IMR-90 (cell line): ENCODE measurements at regions of chr5 and their contacts with region 1.

Region 1: GRCh38 chr5:135034236-135034962 is 371 bp upstream of the PITX1 start:
- DNase-seq: peak; percentile 69
- ATAC-seq: peak; percentile 73
- H3K4me3 ChIP-seq: peak overlapping the region; percentile 60
- H3K27ac ChIP-seq: peak overlapping the region; percentile 92
- H3K4me1 ChIP-seq: peaks cover 19% of the 10 kb centered on the region; the same call in 1 of the 2 replicates
- H3K27me3 ChIP-seq: peaks cover 26% of the 10 kb centered on the region
- CTCF ChIP-seq: no peak
- POLR2A ChIP-seq: no peak
- RAD21 ChIP-seq: no peak; the same call in 1 of the 2 replicates

Region 2: GRCh38 chr5:135139381-135140137 is 105.2 kb after region 1 on chr5:
- CTCF ChIA-PET with region 1: no interaction called
- POLR2A ChIA-PET with region 1: interaction called, 4 read pairs
- dilution Hi-C with region 1: no loop called
- in situ Hi-C with region 1: no loop called
- intact Hi-C with region 1: loop called (anchors 2 kb)
- DNase-seq: peak; percentile 96
- ATAC-seq: peak; percentile 83
- H3K4me3 ChIP-seq: no peak overlapping the region; the same call in 1 of the 2 replicates
- H3K27ac ChIP-seq: peak overlapping the region; percentile 99
- H3K4me1 ChIP-seq: peaks cover 45% of the 10 kb centered on the region
- H3K27me3 ChIP-seq: no peaks in the 10 kb centered on the region
- CTCF ChIP-seq: no peak
- POLR2A ChIP-seq: no peak
- RAD21 ChIP-seq: no peak

Region 3: GRCh38 chr5:135191084-135191826 is 156.9 kb after region 1 on chr5:
- CTCF ChIA-PET with region 1: interaction called, 4 read pairs
- POLR2A ChIA-PET with region 1: no interaction called
- dilution Hi-C with region 1: no loop called
- in situ Hi-C with region 1: no loop called
- intact Hi-C with region 1: loop called (anchors 2 kb)
- DNase-seq: peak; percentile 68
- ATAC-seq: peak; percentile 77
- H3K4me3 ChIP-seq: no peak overlapping the region
- H3K27ac ChIP-seq: no peak overlapping the region
- H3K4me1 ChIP-seq: peaks cover 19% of the 10 kb centered on the region
- H3K27me3 ChIP-seq: no peaks in the 10 kb centered on the region
- CTCF ChIP-seq: peak; percentile 89
- POLR2A ChIP-seq: no peak
- RAD21 ChIP-seq: peak; percentile 90

Region 4: DNA sequence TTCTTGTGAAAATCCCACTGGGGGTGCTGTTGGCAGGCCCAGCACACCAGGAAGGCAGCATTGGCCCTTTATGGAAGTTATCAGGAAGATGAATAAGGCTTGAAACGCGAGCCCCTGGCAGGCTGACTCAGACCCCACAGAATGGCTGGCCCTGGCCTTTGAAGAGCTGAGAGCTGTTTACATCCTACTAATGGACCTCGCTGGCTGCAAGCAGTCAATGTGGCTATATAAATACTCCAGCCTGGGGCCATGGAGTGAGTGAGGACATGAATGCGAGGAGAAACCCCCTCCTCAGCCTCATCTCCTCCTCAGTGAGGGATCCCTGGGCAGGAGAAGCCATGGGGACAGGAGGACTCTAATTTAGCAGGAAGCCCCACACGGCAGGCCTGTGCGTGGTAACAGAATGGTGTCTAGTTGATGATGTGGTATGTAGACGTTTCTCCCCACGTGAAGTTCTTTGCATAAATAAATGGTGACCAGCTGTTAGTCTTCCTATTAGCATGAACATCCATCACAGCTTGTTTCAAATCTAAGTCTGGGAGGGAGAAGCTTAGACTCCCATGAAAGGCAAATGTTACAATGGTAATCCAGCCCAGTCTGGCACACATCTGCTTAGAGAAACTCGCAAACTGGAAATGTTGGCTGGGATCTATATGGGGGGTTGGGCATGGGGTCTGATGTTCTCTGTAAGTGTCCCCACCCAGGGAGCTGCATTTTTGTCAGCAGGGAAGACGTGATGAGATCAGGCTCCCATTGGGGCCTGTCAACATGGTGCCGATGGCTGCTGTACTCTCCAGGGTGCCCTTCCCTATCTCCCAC is 174.7 kb after region 1 on chr5:
- CTCF ChIA-PET with region 1: interaction called, 3 read pairs
- POLR2A ChIA-PET with region 1: no interaction called
- dilution Hi-C with region 1: no loop called
- in situ Hi-C with region 1: no loop called
- intact Hi-C with region 1: loop called (anchors 5 kb)
- DNase-seq: peak; percentile 98
- ATAC-seq: peak; percentile 87
- H3K4me3 ChIP-seq: no peak overlapping the region
- H3K27ac ChIP-seq: peak overlapping the region; percentile 98
- H3K4me1 ChIP-seq: peaks cover 40% of the 10 kb centered on the region
- H3K27me3 ChIP-seq: no peaks in the 10 kb centered on the region
- CTCF ChIP-seq: peak; percentile 54
- POLR2A ChIP-seq: no peak
- RAD21 ChIP-seq: peak; percentile 61

Region 5: GRCh38 chr5:135263022-135263668 is 228.7 kb after region 1 on chr5:
- CTCF ChIA-PET with region 1: no interaction called
- POLR2A ChIA-PET with region 1: no interaction called
- dilution Hi-C with region 1: no loop called
- in situ Hi-C with region 1: no loop called
- intact Hi-C with region 1: loop called (anchors 5 kb)
- DNase-seq: no peak
- ATAC-seq: no peak
- H3K4me3 ChIP-seq: no peak overlapping the region
- H3K27ac ChIP-seq: peak overlapping the region; percentile 3; the same call in 1 of the 2 replicates
- H3K4me1 ChIP-seq: peaks cover 26% of the 10 kb centered on the region
- H3K27me3 ChIP-seq: no peaks in the 10 kb centered on the region
- CTCF ChIP-seq: no peak
- POLR2A ChIP-seq: no peak
- RAD21 ChIP-seq: no peak

Region 6: GRCh38 chr5:135426102-135427082 is 392.0 kb after region 1 on chr5:
- CTCF ChIA-PET with region 1: no interaction called
- POLR2A ChIA-PET with region 1: interaction called, 16 read pairs
- dilution Hi-C with region 1: no loop called
- in situ Hi-C with region 1: no loop called
- intact Hi-C with region 1: no loop called
- DNase-seq: peak; percentile 61
- ATAC-seq: peak; percentile 93
- H3K4me3 ChIP-seq: no peak overlapping the region
- H3K27ac ChIP-seq: no peak overlapping the region
- H3K4me1 ChIP-seq: no peaks in the 10 kb centered on the region
- H3K27me3 ChIP-seq: no peaks in the 10 kb centered on the region
- CTCF ChIP-seq: peak; percentile 71
- POLR2A ChIP-seq: no peak
- RAD21 ChIP-seq: peak; percentile 74

Region 7: DNA sequence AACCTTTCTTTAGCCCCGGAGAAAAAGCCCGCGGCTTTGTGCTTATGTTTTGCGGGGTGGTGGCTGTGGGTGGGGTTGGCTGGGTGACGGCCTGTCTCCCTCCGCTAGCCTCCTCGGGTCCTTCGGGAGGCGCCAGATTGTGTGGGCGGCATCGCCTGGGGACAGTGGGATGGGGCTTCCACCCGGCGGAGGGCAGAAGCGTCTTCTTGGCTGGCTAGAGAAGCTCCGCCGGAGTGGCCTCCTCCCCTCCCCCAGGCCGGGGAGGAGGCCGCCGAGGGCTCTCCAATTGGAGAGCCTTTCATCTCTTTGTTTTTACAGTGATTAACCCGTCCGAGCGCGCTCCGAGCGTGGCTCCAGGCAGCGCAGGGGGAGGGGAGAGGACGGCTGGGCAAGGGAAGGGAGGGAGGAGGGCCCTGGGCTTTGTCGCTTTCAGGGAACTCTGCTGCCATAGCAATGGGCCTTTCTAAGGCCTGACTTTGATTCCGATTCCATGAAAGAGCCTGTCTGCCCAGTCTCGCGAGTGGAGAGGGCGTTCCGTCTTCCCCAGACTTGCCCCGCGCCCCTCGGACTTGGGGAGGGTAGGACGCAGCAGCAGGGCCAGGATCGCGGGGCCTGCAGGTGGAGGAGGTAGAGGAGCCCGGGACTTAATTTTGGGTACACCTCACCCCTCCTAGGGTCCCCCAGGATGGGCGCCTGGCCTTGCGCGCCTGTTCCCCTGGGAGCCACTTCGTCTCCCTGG is 454.5 kb after region 1 on chr5:
- CTCF ChIA-PET with region 1: no interaction called
- POLR2A ChIA-PET with region 1: no interaction called
- dilution Hi-C with region 1: no loop called
- in situ Hi-C with region 1: no loop called
- intact Hi-C with region 1: no loop called
- DNase-seq: peak; percentile 73
- ATAC-seq: peak; percentile 95
- H3K4me3 ChIP-seq: peak overlapping the region; percentile 51
- H3K27ac ChIP-seq: 0 out of 2 replicates have a peak overlapping the region, but pooled peaks have one; percentile 34
- H3K4me1 ChIP-seq: peaks cover 10% of the 10 kb centered on the region
- H3K27me3 ChIP-seq: peaks cover 58% of the 10 kb centered on the region
- CTCF ChIP-seq: no peak
- POLR2A ChIP-seq: no peak
- RAD21 ChIP-seq: no peak